ENCODE measurements at regions of chr14 and their contacts with region 1.

Region 1: GRCh38 chr14:21136024-21136423 is 19.8 kb downstream of the OR5AU1 start:
- DNase-seq: no peak
- ATAC-seq: no peak
- H3K4me3 Mint-ChIP-seq: no peak overlapping the region
- H3K27ac Mint-ChIP-seq: no peak overlapping the region
- H3K4me1 Mint-ChIP-seq: no peaks in the 10 kb centered on the region
- H3K27me3 Mint-ChIP-seq: no peaks in the 10 kb centered on the region
- CTCF ChIP-seq: peak; percentile 85

Region 2: GRCh38 chr14:21123429-21123828 is 12.6 kb before region 1 on chr14:
- CTCF ChIA-PET with region 1: interaction called, 25 read pairs
- POLR2A ChIA-PET with region 1: no interaction called
- intact Hi-C with region 1: no loop called
- DNase-seq: no peak
- ATAC-seq: no peak
- H3K4me3 Mint-ChIP-seq: no peak overlapping the region
- H3K27ac Mint-ChIP-seq: no peak overlapping the region
- H3K4me1 Mint-ChIP-seq: no peaks in the 10 kb centered on the region
- H3K27me3 Mint-ChIP-seq: peaks cover 28% of the 10 kb centered on the region
- CTCF ChIP-seq: no peak